Thyroid gland (tissue), 4 donors: ENCODE measurements at regions of chr5 and their contacts with region 1.

Region 1: DNA sequence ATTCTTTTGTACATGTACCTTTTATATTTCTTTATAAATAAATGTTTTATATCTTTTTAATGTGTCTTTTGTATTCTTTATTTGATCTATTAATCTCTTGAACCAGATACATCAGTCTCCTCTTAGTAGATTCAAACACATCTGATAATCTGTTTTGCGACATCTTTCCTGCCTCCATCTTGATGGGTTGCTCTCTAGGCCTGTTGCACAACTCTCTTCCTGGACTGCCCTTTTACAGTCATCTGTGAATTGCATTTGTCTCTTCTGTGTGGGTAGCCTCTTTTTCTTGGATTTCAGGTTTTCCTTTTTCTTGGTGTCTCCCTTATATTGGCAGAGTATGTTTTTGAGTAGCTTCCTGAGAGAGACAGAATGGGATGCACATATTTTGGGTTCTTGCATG is 6.2 kb downstream of the ZFYVE16 start:
- DNase-seq: no peak
- H3K4me3 ChIP-seq: no peak overlapping the region
- H3K27ac ChIP-seq: no peak overlapping the region
- H3K4me1 ChIP-seq: peaks cover 2 to 6% of the 10 kb centered on the region in 2 donors
- H3K27me3 ChIP-seq: no peaks in the 10 kb centered on the region
- CTCF ChIP-seq: no peak
- POLR2A ChIP-seq: no peak

Region 2: GRCh38 chr5:80654391-80655230 is 240.5 kb after region 1 on chr5 and contains the starts of genes DHFR and MSH3:
- intact Hi-C with region 1: loop called (anchors 5 kb)
- DNase-seq: peak; percentile 87
- H3K4me3 ChIP-seq: peak within 1 kb of the TSS in 2 of 3 donors; percentile 68 to 74
- H3K27ac ChIP-seq: peak within 1 kb of the TSS; percentile 87 to 92 (median 90)
- H3K4me1 ChIP-seq: peaks cover 8 to 14% of the 10 kb centered on the region in 2 donors
- H3K27me3 ChIP-seq: no peaks in the 10 kb centered on the region
- CTCF ChIP-seq: peak in 3 of 6 experiments; percentile 14 to 42 (median 38)
- POLR2A ChIP-seq: peak in 1 of 2 donors; percentile 76
- total RNA-seq, gene DHFR: 5.6 to 12.8 (median 11.5) TPM
- total RNA-seq, gene MSH3: 25.9 to 45.0 (median 26.1) TPM